GM12878 (cell line): ENCODE measurements at regions of chr2 and their contacts with region 1.

Region 1: GRCh38 chr2:154537843-154538450 is 160.5 kb upstream of the KCNJ3 start:
- DNase-seq: no peak
- ATAC-seq: peak; percentile 32; the same call in 1 of the 3 replicates
- H3K4me3 ChIP-seq: no peak overlapping the region
- H3K27ac ChIP-seq: no peak overlapping the region
- H3K4me1 ChIP-seq: no peaks in the 10 kb centered on the region
- H3K27me3 ChIP-seq: no peaks in the 10 kb centered on the region
- CTCF ChIP-seq: no peak
- EP300 ChIP-seq: no peak
- POLR2A ChIP-seq: no peak
- RAD21 ChIP-seq: no peak

Region 2: DNA sequence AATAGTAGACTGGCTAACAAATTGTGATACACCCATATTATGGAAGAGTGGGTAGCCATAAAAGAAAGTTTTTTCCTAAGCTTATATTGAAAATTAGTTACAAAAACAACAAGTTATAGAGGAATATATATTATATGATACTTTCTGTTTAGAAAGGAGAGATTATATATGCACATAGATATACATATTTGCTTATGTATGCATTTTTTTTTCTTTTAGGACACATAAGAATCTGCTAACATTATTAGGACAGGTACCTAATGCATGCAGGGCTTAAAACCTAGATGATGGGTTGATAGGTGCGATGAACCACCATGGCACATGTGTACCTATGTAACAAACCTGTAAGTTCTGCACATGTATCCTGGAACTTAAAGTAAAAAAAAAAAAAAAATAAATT is 19.1 kb before region 1 on chr2:
- CTCF ChIA-PET with region 1: interaction called, 5 read pairs
- POLR2A ChIA-PET with region 1: interaction called, 3 read pairs
- RAD21 ChIA-PET with region 1: no interaction called
- SMC1A ChIA-PET with region 1: interaction called, 10 read pairs
- in situ Hi-C with region 1: no loop called
- intact Hi-C with region 1: no loop called
- DNase-seq: no peak
- ATAC-seq: no peak
- H3K4me3 ChIP-seq: no peak overlapping the region
- H3K27ac ChIP-seq: no peak overlapping the region
- H3K4me1 ChIP-seq: no peaks in the 10 kb centered on the region
- H3K27me3 ChIP-seq: no peaks in the 10 kb centered on the region
- CTCF ChIP-seq: no peak
- EP300 ChIP-seq: no peak
- POLR2A ChIP-seq: no peak
- RAD21 ChIP-seq: no peak

Region 3: DNA sequence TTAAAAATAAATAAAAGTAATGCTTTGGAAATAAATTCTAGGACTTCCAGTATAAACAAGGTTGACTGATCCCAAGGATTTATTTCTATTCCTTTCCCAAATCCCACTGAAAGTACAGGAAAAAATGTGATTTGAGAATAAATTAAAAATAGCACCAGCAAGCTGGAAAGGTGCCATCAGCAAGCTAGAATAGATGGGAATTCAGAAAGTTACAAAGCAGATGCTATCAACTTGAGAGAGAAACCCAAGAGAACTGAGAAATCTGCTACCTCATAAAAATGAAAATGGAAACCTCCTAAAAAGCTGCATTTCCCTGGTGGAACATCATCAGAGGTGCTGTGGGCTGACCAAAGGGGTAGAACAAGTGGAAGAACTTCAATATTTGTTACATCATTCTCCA is 11.9 kb after region 1 on chr2:
- CTCF ChIA-PET with region 1: interaction called, 6 read pairs
- POLR2A ChIA-PET with region 1: interaction called, 7 read pairs
- RAD21 ChIA-PET with region 1: interaction called, 14 read pairs
- SMC1A ChIA-PET with region 1: interaction called, 28 read pairs
- in situ Hi-C with region 1: no loop called
- intact Hi-C with region 1: no loop called
- DNase-seq: no peak
- ATAC-seq: no peak
- H3K4me3 ChIP-seq: no peak overlapping the region
- H3K27ac ChIP-seq: no peak overlapping the region
- H3K4me1 ChIP-seq: no peaks in the 10 kb centered on the region
- H3K27me3 ChIP-seq: no peaks in the 10 kb centered on the region
- CTCF ChIP-seq: no peak
- EP300 ChIP-seq: no peak
- POLR2A ChIP-seq: no peak
- RAD21 ChIP-seq: no peak

Region 4: DNA sequence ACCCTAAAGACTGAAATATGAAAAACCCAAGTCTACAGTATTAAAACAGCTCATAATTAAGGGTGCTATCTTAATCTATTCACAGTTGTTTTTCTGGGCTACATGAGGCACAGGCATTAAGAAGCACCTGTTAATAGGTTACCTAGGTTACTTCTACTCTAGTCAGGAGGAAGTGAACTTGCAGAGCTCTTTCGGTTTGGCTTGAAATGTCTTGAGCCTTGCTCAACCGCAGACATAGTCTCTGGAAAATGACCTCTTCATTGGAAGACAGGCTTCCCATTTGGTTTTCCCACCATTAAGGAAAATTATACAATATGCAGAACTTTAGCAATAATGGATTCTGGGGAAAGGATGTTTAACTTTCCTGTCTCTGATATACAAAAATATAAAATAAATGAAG is 18.2 kb after region 1 on chr2:
- CTCF ChIA-PET with region 1: interaction called, 6 read pairs
- POLR2A ChIA-PET with region 1: interaction called, 7 read pairs
- RAD21 ChIA-PET with region 1: interaction called, 14 read pairs
- SMC1A ChIA-PET with region 1: interaction called, 28 read pairs
- in situ Hi-C with region 1: no loop called
- intact Hi-C with region 1: no loop called
- DNase-seq: no peak
- ATAC-seq: peak; percentile 92
- H3K4me3 ChIP-seq: no peak overlapping the region
- H3K27ac ChIP-seq: no peak overlapping the region
- H3K4me1 ChIP-seq: no peaks in the 10 kb centered on the region
- H3K27me3 ChIP-seq: no peaks in the 10 kb centered on the region
- CTCF ChIP-seq: no peak
- EP300 ChIP-seq: no peak
- POLR2A ChIP-seq: no peak
- RAD21 ChIP-seq: no peak

Region 5: GRCh38 chr2:154720651-154721050 is 182.7 kb after region 1 on chr2:
- CTCF ChIA-PET with region 1: no interaction called
- POLR2A ChIA-PET with region 1: no interaction called
- RAD21 ChIA-PET with region 1: no interaction called
- SMC1A ChIA-PET with region 1: no interaction called
- in situ Hi-C with region 1: no loop called
- intact Hi-C with region 1: no loop called
- DNase-seq: no peak
- ATAC-seq: no peak
- H3K4me3 ChIP-seq: no peak overlapping the region
- H3K27ac ChIP-seq: no peak overlapping the region
- H3K4me1 ChIP-seq: no peaks in the 10 kb centered on the region
- H3K27me3 ChIP-seq: no peaks in the 10 kb centered on the region
- CTCF ChIP-seq: no peak
- EP300 ChIP-seq: no peak
- POLR2A ChIP-seq: no peak
- RAD21 ChIP-seq: no peak